ENCODE measurements at regions of chr3 and their contacts with region 1.

Region 1: GRCh38 chr3:56801662-56802377 is at the start of gene ARHGEF3:
- DNase-seq: peak; percentile 90
- ATAC-seq: peak; percentile 88
- H3K4me3 Mint-ChIP-seq: peak within 1 kb of the TSS; percentile 96
- H3K27ac Mint-ChIP-seq: peak within 1 kb of the TSS; percentile 83
- H3K4me1 Mint-ChIP-seq: peaks cover 35% of the 10 kb centered on the region
- H3K27me3 Mint-ChIP-seq: no peaks in the 10 kb centered on the region
- total RNA-seq, gene ARHGEF3: 94.0 to 96.4 TPM

Region 2: GRCh38 chr3:56556908-56557830 is 244.7 kb before region 1 on chr3 and contains the start of gene CCDC66:
- CTCF ChIA-PET with region 1: interaction called, 11 read pairs
- DNase-seq: peak; percentile 96
- ATAC-seq: peak; percentile 99
- H3K4me3 Mint-ChIP-seq: peak within 1 kb of the TSS; percentile 99
- H3K27ac Mint-ChIP-seq: peak within 1 kb of the TSS; percentile 99
- H3K4me1 Mint-ChIP-seq: peaks cover 20% of the 10 kb centered on the region
- H3K27me3 Mint-ChIP-seq: peaks cover 13% of the 10 kb centered on the region
- total RNA-seq, gene CCDC66: 40.8 to 47.8 TPM

Region 3: GRCh38 chr3:56702490-56703315 is 99.1 kb before region 1 on chr3:
- CTCF ChIA-PET with region 1: interaction called, 203 read pairs
- DNase-seq: peak; percentile 65
- ATAC-seq: peak; percentile 58
- H3K4me3 Mint-ChIP-seq: no peak overlapping the region
- H3K27ac Mint-ChIP-seq: peak overlapping the region; percentile 39
- H3K4me1 Mint-ChIP-seq: peaks cover 23% of the 10 kb centered on the region
- H3K27me3 Mint-ChIP-seq: no peaks in the 10 kb centered on the region

Region 4: DNA sequence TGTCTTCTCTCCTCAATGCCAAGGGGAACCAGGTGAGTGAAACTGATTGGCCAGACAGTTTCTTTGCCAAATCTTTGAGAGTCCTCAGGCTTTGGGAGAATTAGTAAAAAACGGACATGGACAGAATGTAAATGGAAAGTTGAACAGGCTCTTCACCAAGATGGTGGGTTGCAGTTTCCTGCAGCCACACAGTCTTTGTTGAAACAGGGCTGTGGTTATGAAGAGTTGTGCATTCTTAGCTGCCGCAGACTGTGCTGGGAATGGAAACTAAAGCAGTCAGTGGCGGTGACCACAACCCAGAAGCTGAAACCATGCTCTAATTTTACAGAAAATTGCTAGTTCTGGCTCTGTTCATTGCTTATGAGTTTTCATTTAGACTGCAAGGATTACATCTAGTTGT is 76.6 kb before region 1 on chr3:
- CTCF ChIA-PET with region 1: interaction called, 49 read pairs
- DNase-seq: peak; percentile 91
- ATAC-seq: peak; percentile 89
- H3K4me3 Mint-ChIP-seq: peak overlapping the region; percentile 62
- H3K27ac Mint-ChIP-seq: peak overlapping the region; percentile 95
- H3K4me1 Mint-ChIP-seq: peaks cover 58% of the 10 kb centered on the region
- H3K27me3 Mint-ChIP-seq: no peaks in the 10 kb centered on the region

Region 5: DNA sequence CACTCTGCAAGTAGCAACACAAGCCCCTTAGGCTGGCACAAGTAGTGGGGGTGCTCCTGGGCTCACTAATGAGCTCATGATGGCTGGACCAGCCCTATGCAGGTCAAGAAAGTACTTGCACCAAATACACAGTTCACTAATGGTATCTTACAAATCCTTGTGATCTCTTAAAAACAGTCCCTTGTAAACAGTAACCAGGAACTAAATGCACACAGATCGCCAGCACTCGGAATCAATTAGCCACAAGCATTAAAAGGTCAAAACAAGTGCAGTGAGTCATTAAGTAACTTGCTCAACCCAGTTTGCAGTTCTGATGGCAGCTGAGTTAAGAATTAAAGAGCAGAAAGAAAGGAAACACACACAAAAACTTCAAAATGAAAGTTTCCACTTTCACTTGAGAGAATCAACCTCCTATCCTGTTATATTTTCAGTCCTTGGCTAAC is 43.3 kb before region 1 on chr3:
- CTCF ChIA-PET with region 1: interaction called, 36 read pairs
- DNase-seq: peak; percentile 62
- ATAC-seq: peak; percentile 79
- H3K4me3 Mint-ChIP-seq: peak overlapping the region; percentile 18
- H3K27ac Mint-ChIP-seq: peak overlapping the region; percentile 76
- H3K4me1 Mint-ChIP-seq: peaks cover 76% of the 10 kb centered on the region
- H3K27me3 Mint-ChIP-seq: no peaks in the 10 kb centered on the region

Region 6: GRCh38 chr3:56812754-56813650 is 11.2 kb after region 1 on chr3:
- CTCF ChIA-PET with region 1: interaction called, 19 read pairs
- DNase-seq: no peak
- ATAC-seq: no peak
- H3K4me3 Mint-ChIP-seq: no peak overlapping the region
- H3K27ac Mint-ChIP-seq: no peak overlapping the region
- H3K4me1 Mint-ChIP-seq: peaks cover 28% of the 10 kb centered on the region
- H3K27me3 Mint-ChIP-seq: no peaks in the 10 kb centered on the region

Region 7: GRCh38 chr3:56899851-56900250 is 98.0 kb after region 1 on chr3:
- CTCF ChIA-PET with region 1: no interaction called
- DNase-seq: no peak
- ATAC-seq: no peak
- H3K4me3 Mint-ChIP-seq: no peak overlapping the region
- H3K27ac Mint-ChIP-seq: no peak overlapping the region
- H3K4me1 Mint-ChIP-seq: peaks cover 32% of the 10 kb centered on the region
- H3K27me3 Mint-ChIP-seq: no peaks in the 10 kb centered on the region

Region 8: GRCh38 chr3:56921573-56922453 is 120.0 kb after region 1 on chr3:
- CTCF ChIA-PET with region 1: interaction called, 61 read pairs
- DNase-seq: peak; percentile 71
- ATAC-seq: peak; percentile 41
- H3K4me3 Mint-ChIP-seq: peak overlapping the region; percentile 68
- H3K27ac Mint-ChIP-seq: peak overlapping the region; percentile 98
- H3K4me1 Mint-ChIP-seq: peaks cover 77% of the 10 kb centered on the region
- H3K27me3 Mint-ChIP-seq: no peaks in the 10 kb centered on the region